Posterior cingulate gyrus (tissue), 11 donors: ENCODE measurements at regions of chr10 and their contacts with region 1.

Region 1: DNA sequence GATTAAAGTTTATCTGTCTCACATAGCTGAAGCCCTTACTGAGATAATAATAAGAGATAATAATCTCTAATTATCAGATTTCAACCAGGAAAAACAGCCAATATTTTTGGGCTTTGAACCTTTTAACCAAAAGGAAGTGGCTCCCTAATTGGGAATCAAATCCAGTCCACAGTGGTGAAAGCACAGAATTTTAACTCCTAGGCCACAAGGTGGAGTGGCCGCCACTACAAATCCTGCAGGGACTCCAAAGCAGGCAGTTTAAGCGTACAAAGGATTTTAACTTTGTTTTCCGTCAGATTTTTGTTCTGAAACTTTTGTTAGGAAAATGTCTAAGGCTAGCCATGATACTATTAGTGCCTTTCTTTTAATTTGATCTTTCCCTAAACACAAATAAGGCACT is 99.6 kb upstream of the CCNY start:
- DNase-seq: no peak

Region 2: DNA sequence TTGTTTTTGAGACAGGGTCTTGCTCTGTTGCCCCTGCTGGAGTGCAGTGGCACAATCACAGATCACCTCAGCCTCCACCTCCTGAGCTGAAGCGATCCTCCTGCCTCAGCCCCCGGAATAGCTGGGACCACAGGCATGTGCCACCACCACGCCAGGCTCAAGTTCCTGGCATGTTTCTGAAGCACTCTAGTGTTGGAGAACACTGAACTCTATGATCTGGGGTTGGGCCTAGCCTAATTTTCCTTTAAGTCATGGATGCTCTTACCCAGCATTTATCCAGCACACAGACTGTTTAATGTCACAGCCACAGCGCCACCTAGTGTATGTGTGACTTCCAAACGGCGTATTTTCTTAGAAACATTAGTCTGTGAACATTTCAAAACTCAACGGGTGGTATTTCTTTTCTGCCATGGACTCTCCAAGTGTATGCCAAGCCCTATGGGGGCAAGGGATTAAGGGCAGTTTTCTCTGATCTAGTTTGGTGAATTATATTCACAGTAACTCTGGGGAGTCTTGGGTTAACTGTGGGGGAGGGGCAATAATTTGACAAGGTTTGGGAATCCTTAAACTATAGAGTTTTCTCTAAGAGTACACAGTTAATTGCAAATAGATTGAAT is 18.3 kb before region 1 on chr10:
- intact Hi-C with region 1: no loop called
- DNase-seq: peak in 7 of 10 donors; percentile 48 to 94 (median 80)

Region 3: GRCh38 chr10:36779234-36779846 is 1542.6 kb after region 1 on chr10:
- intact Hi-C with region 1: loop called (anchors 5 kb)
- DNase-seq: peak in 3 of 10 donors; percentile 26 to 35 (median 31)